BJ (cell line): ENCODE measurements at regions of chr9 and their contacts with region 1.

Region 1: GRCh38 chr9:14428781-14429230 is 114.9 kb upstream of the NFIB start:
- DNase-seq: no peak
- H3K4me3 ChIP-seq: no peak overlapping the region
- H3K27me3 ChIP-seq: peaks cover 12% of the 10 kb centered on the region
- CTCF ChIP-seq: peak; percentile 82

Region 2: DNA sequence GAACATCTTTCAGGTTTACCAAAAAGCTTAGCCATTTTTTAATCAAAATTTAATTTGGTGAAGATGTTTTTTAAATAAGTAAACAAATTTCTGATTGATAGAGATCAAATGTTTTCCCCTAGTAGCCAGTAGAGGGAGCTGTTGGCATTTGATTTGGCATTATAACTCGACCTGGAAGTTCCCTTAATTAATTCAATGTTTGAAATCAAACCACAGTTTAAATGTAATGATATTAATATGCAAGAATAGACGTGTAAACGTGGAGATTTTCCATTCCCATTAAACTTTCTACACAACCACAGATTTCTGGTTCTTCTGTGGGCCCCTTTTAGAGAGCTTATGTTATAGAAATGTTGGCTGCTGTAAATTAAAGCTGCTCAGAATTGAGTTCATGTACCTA is 1001.2 kb before region 1 on chr9:
- CTCF ChIA-PET with region 1: interaction called, 15 read pairs
- POLR2A ChIA-PET with region 1: no interaction called
- DNase-seq: no peak
- H3K4me3 ChIP-seq: no peak overlapping the region
- H3K27me3 ChIP-seq: no peaks in the 10 kb centered on the region; the same call in 1 of the 2 replicates
- CTCF ChIP-seq: peak; percentile 56

Region 3: GRCh38 chr9:14415947-14416346 is 12.9 kb before region 1 on chr9:
- CTCF ChIA-PET with region 1: interaction called, 18 read pairs
- POLR2A ChIA-PET with region 1: no interaction called
- DNase-seq: no peak
- H3K4me3 ChIP-seq: no peak overlapping the region
- H3K27me3 ChIP-seq: peaks cover 28% of the 10 kb centered on the region
- CTCF ChIP-seq: no peak

Region 4: DNA sequence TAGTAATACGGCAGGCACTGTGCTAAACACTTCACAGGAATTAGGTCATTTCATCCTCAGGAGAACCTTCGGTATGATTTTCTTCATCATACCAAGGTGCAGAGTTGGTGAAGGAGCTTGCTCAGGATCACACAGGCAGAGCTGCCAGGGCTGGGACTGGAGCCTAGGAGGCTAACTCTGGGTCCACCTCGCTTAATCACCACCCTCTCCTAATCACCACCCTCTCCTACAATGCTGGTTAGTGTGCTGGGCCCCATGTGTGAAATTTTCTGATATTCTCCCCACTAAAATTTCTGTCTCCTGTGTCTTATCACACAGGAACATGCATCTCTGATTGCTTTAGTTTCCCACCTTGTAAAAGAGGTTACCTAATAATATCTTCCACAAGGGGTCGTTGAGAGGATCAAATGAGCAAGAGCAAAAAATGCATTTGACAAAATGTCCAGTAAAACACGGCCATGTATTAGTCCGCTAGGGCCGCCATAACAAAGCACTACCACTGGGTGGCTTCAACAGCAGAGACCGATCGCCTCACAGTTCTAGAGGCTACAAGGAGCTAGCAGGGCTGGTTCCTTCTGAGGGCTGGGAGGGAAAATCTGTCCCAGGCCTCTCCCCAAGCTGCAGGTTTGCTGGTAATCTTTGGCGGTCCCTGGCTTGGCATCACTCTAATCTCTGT is 13.3 kb after region 1 on chr9:
- CTCF ChIA-PET with region 1: interaction called, 30 read pairs
- POLR2A ChIA-PET with region 1: no interaction called
- DNase-seq: no peak
- H3K4me3 ChIP-seq: no peak overlapping the region
- H3K27me3 ChIP-seq: no peaks in the 10 kb centered on the region; the same call in 1 of the 2 replicates
- CTCF ChIP-seq: peak; percentile 20